ENCODE measurements at regions of chr2 and their contacts with region 1.

Region 1: GRCh38 chr2:25063876-25064660 is 22.2 kb downstream of the EFR3B start:
- DNase-seq: peak; percentile 56 to 95 (median 74)

Region 2: DNA sequence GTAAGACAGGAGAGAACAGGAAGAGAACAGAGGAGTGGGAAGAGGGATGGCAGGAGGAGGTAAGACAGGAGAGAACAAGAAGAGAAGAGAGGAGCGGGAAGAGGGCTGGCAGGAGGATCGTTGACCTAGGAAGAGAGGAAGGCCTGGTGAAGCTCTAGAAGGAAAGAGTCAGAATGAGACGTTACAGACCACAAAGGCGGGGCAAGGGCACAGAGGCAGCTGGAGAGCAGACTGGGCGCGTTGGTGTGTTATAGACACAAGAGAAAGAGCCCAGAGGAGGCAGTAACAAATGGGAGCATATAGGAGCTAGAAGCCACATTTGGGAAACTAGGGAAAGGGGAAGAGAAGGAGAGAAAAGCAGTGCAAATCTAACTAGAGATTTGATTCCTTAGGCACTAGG is 297.5 kb before region 1 on chr2:
- intact Hi-C with region 1: no loop called
- DNase-seq: no peak

Region 3: DNA sequence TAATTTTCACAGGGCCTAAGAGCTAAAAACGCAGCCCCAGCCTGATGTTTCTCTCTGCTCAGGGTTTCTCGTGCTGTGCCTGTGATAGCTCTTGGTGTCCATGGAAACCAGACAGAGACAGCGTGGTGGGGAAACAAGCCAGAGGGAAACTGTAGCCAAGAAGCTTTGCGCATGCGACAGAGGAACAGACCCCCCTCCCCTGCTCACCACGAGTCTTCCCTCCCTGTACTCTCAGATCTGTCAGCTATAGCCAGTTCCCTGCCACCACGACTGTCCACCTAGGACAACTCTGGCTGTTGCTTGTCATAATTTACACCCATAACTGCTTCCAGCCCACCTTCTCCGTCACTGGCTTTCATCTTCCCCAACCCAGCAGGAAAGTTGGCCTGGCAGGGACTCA is 79.2 kb before region 1 on chr2:
- intact Hi-C with region 1: loop called (anchors 5 kb)
- DNase-seq: peak; percentile 44 to 95 (median 66)